Panc1 (cell line): ENCODE measurements at regions of chr16 and their contacts with region 1.

Region 1: GRCh38 chr16:77043076-77043475 is 147.9 kb upstream of the MON1B start:
- DNase-seq: peak; percentile 30
- ATAC-seq: no peak
- H3K4me3 ChIP-seq: no peak overlapping the region
- H3K27ac ChIP-seq: no peak overlapping the region
- H3K4me1 ChIP-seq: no peaks in the 10 kb centered on the region
- H3K27me3 ChIP-seq: no peaks in the 10 kb centered on the region
- CTCF ChIP-seq: peak; percentile 47; the same call in 1 of the 2 replicates

Region 2: GRCh38 chr16:76668207-76668725 is 374.8 kb before region 1 on chr16:
- CTCF ChIA-PET with region 1: no interaction called
- POLR2A ChIA-PET with region 1: no interaction called
- in situ Hi-C with region 1: no loop called
- intact Hi-C with region 1: loop called (anchors 10 kb)
- DNase-seq: no peak
- ATAC-seq: no peak
- H3K4me3 ChIP-seq: no peak overlapping the region
- H3K27ac ChIP-seq: no peak overlapping the region
- H3K4me1 ChIP-seq: no peaks in the 10 kb centered on the region
- H3K27me3 ChIP-seq: no peaks in the 10 kb centered on the region
- CTCF ChIP-seq: no peak

Region 3: GRCh38 chr16:76963614-76964315 is 79.3 kb before region 1 on chr16:
- CTCF ChIA-PET with region 1: no interaction called
- POLR2A ChIA-PET with region 1: no interaction called
- in situ Hi-C with region 1: no loop called
- intact Hi-C with region 1: no loop called
- DNase-seq: no peak
- ATAC-seq: no peak
- H3K4me3 ChIP-seq: no peak overlapping the region
- H3K27ac ChIP-seq: no peak overlapping the region
- H3K4me1 ChIP-seq: no peaks in the 10 kb centered on the region
- H3K27me3 ChIP-seq: no peaks in the 10 kb centered on the region
- CTCF ChIP-seq: no peak